OCI-LY7 (cell line): ENCODE measurements at regions of chr2 and their contacts with region 1.

Region 1: DNA sequence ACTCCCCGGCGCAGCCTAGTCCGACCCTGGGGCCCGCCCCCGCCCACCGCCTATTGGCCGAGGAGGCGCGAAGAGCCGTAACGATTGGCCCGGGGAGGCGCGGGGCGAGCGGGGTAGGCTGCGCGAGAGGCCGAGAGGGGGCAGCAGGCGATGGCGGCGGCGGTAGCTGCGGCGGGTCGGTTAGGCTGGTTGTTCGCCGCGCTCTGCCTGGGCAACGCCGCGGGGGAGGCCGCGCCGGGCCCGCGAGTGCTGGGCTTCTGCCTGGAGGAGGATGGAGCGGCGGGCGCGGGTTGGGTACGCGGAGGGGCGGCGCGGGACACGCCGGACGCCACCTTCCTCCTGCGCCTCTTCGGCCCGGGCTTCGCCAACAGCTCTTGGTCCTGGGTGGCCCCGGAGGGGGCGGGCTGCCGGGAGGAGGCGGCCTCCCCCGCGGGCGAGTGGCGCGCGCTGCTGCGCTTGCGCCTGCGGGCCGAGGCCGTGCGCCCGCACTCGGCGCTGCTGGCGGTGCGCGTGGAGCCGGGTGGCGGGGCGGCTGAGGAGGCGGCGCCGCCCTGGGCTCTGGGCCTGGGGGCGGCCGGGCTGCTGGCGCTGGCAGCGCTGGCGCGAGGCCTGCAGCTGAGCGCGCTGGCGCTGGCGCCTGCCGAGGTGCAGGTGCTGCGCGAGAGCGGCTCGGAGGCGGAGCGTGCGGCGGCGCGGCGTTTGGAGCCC is at the start of gene CNNM3:
- DNase-seq: peak; percentile 94
- H3K4me3 ChIP-seq: peak within 1 kb of the TSS; percentile 90
- H3K27ac ChIP-seq: peak within 1 kb of the TSS; percentile 58
- H3K4me1 ChIP-seq: peaks cover 46% of the 10 kb centered on the region
- CTCF ChIP-seq: peak; percentile 61
- total RNA-seq, gene CNNM3: 9.1 and 13.5 TPM in 2 replicates

Region 2: GRCh38 chr2:96702098-96702785 is 114.0 kb before region 1 on chr2:
- CTCF ChIA-PET with region 1: interaction called, 12 read pairs
- POLR2A ChIA-PET with region 1: no interaction called
- intact Hi-C with region 1: no loop called
- DNase-seq: no peak
- H3K4me3 ChIP-seq: no peak overlapping the region
- H3K27ac ChIP-seq: no peak overlapping the region
- H3K4me1 ChIP-seq: no peaks in the 10 kb centered on the region
- CTCF ChIP-seq: no peak